H1 (cell line): ENCODE measurements at regions of chr3 and their contacts with region 1.

Region 1: GRCh38 chr3:45409921-45410320 is 21.5 kb downstream of the LARS2 start:
- DNase-seq: no peak
- H3K4me3 ChIP-seq: no peak overlapping the region
- H3K27ac ChIP-seq: no peak overlapping the region
- H3K4me1 ChIP-seq: no peaks in the 10 kb centered on the region
- H3K27me3 ChIP-seq: no peaks in the 10 kb centered on the region
- CTCF ChIP-seq: no peak
- EP300 ChIP-seq: no peak
- POLR2A ChIP-seq: no peak
- RAD21 ChIP-seq: no peak

Region 2: GRCh38 chr3:45398178-45398577 is 11.7 kb before region 1 on chr3:
- CTCF ChIA-PET with region 1: interaction called, 3 read pairs
- POLR2A ChIA-PET with region 1: interaction called, 10 read pairs
- DNase-seq: no peak
- H3K4me3 ChIP-seq: no peak overlapping the region
- H3K27ac ChIP-seq: no peak overlapping the region
- H3K4me1 ChIP-seq: no peaks in the 10 kb centered on the region
- H3K27me3 ChIP-seq: no peaks in the 10 kb centered on the region
- CTCF ChIP-seq: no peak
- EP300 ChIP-seq: no peak
- POLR2A ChIP-seq: no peak
- RAD21 ChIP-seq: no peak